Activated CD4-positive, alpha-beta memory T cell treated with anti-CD3 and anti-CD28 coated beads, Interleukin-2, amount 10 ng/mL, durations not matched to agents 7 days and 5 days (primary cell): ENCODE measurements at regions of chr7 and their contacts with region 1.

Region 1: GRCh38 chr7:76179686-76180085 is 22.0 kb upstream of the SRRM3 start:
- DNase-seq: no peak
- H3K4me3 Mint-ChIP-seq: no peak overlapping the region
- H3K27ac Mint-ChIP-seq: no peak overlapping the region
- H3K4me1 Mint-ChIP-seq: peaks cover 4% of the 10 kb centered on the region
- H3K27me3 Mint-ChIP-seq: no peaks in the 10 kb centered on the region

Region 2: GRCh38 chr7:76020031-76020714 is 159.5 kb before region 1 on chr7:
- CTCF ChIA-PET with region 1: no interaction called
- POLR2A ChIA-PET with region 1: no interaction called
- DNase-seq: peak; percentile 81
- H3K4me3 Mint-ChIP-seq: no peak overlapping the region
- H3K27ac Mint-ChIP-seq: peak overlapping the region; percentile 42
- H3K4me1 Mint-ChIP-seq: peaks cover 20% of the 10 kb centered on the region
- H3K27me3 Mint-ChIP-seq: no peaks in the 10 kb centered on the region

Region 3: GRCh38 chr7:76166404-76167255 is 13.1 kb before region 1 on chr7:
- CTCF ChIA-PET with region 1: interaction called, 24 read pairs
- POLR2A ChIA-PET with region 1: interaction called, 7 read pairs
- DNase-seq: peak; percentile 94
- H3K4me3 Mint-ChIP-seq: peak overlapping the region; percentile 81
- H3K27ac Mint-ChIP-seq: peak overlapping the region; percentile 75
- H3K4me1 Mint-ChIP-seq: peaks cover 8% of the 10 kb centered on the region
- H3K27me3 Mint-ChIP-seq: no peaks in the 10 kb centered on the region

Region 4: DNA sequence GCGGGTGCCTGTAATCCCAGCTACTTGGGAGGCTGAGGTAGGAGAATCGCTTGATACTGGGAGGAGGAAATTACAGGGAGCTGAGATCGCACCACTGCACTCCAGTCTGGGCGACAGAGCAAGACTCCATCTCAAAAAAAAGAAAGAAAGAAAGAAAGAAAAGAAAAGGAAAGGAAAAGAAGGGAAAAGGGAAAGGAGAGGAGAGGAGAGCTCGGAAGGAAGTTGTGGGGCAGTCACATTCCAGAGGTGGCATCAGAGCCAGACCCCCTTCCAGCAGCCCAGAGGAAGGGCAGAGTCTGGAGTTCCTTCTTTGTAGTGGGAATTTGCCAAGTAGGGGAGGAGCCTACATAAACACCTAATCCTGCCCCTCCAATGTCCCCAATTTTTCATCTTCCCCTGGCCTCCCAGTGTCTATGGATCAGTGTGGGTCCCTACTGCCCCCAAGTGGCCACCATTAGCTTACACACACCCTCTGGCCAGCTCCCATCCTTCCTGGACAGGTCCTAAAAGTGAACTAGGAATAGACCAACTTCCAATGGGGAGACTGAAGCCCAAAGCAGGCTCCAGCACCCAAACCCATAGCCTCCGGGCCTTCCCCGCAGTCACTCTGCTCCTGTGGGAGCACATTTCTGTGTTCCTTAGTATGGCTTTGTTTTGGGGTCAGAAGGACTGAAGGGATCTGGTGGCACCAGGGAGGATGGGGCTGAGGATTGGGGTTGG is 83.2 kb after region 1 on chr7:
- CTCF ChIA-PET with region 1: interaction called, 31 read pairs
- POLR2A ChIA-PET with region 1: no interaction called
- DNase-seq: peak; percentile 42
- H3K4me3 Mint-ChIP-seq: no peak overlapping the region
- H3K27ac Mint-ChIP-seq: no peak overlapping the region
- H3K4me1 Mint-ChIP-seq: peaks cover 2% of the 10 kb centered on the region
- H3K27me3 Mint-ChIP-seq: peaks cover 16% of the 10 kb centered on the region

Region 5: GRCh38 chr7:76291343-76292212 is 111.9 kb after region 1 on chr7:
- CTCF ChIA-PET with region 1: interaction called, 12 read pairs
- POLR2A ChIA-PET with region 1: no interaction called
- DNase-seq: peak; percentile 90
- H3K4me3 Mint-ChIP-seq: no peak overlapping the region
- H3K27ac Mint-ChIP-seq: peak overlapping the region; percentile 51
- H3K4me1 Mint-ChIP-seq: peaks cover 14% of the 10 kb centered on the region
- H3K27me3 Mint-ChIP-seq: peaks cover 5% of the 10 kb centered on the region